MCF 10A (cell line): ENCODE measurements at regions of chr20 and their contacts with region 1.

Region 1: GRCh38 chr20:57351042-57351783 is at the start of gene RAE1:
- DNase-seq: peak; percentile 87
- H3K4me3 Mint-ChIP-seq: peak within 1 kb of the TSS; percentile 80
- H3K27ac Mint-ChIP-seq: peak within 1 kb of the TSS; percentile 81
- H3K4me1 Mint-ChIP-seq: peaks cover 15% of the 10 kb centered on the region
- H3K27me3 Mint-ChIP-seq: no peaks in the 10 kb centered on the region
- CTCF ChIP-seq: no peak
- total RNA-seq, gene RAE1: 46.7 and 60.3 TPM in 2 replicates

Region 2: GRCh38 chr20:57048027-57048869 is 303.0 kb before region 1 on chr20:
- CTCF ChIA-PET with region 1: interaction called, 11 read pairs
- POLR2A ChIA-PET with region 1: no interaction called
- intact Hi-C with region 1: no loop called
- DNase-seq: peak; percentile 85
- H3K4me3 Mint-ChIP-seq: no peak overlapping the region
- H3K27ac Mint-ChIP-seq: no peak overlapping the region
- H3K4me1 Mint-ChIP-seq: peaks cover 8% of the 10 kb centered on the region
- H3K27me3 Mint-ChIP-seq: no peaks in the 10 kb centered on the region
- CTCF ChIP-seq: peak; percentile 55

Region 3: DNA sequence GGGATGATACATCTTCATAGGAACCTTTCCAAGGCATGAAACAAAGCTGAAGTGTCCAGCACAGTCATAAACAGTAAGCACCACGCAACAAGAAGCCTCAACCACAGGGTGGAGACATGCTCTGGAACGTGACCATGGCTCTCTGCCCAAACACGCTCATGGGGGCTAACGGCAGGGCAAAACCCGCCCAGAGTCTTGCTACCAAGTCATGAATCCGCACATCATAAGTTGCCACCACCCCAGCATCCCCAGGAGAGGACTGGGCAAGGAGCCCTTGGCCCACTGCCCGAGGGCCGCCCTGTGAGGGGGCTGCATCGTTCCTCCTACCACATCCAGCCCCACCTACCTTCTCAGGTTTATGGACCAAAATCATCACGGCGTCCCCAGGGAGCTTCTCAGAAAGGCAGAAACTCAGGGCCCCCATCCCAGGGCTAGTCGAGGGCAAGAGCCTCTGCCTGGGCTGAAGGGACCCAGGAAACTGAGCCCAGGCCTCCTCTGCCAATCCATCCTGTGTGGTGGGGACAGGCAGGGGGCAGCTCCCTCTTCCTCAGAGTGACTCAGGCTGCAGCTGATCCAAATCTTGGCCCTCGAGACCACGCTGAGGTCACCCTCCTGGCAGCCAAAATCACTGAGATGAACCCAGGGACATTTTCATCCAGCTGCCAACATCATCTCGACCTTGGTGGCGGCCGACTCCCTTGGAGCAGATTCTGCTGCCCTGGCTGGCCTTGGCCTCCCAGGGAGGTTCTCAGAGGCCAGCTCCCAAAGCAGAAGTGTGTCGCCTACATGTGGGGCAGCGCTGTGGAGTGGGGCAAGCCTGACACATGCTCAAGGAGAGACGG is 127.3 kb before region 1 on chr20:
- CTCF ChIA-PET with region 1: interaction called, 12 read pairs
- POLR2A ChIA-PET with region 1: no interaction called
- intact Hi-C with region 1: no loop called
- DNase-seq: peak; percentile 11
- H3K4me3 Mint-ChIP-seq: no peak overlapping the region
- H3K27ac Mint-ChIP-seq: no peak overlapping the region
- H3K4me1 Mint-ChIP-seq: no peaks in the 10 kb centered on the region
- H3K27me3 Mint-ChIP-seq: peaks cover 12% of the 10 kb centered on the region
- CTCF ChIP-seq: no peak

Region 4: GRCh38 chr20:57323034-57323433 is 28.2 kb before region 1 on chr20:
- CTCF ChIA-PET with region 1: interaction called, 216 read pairs
- POLR2A ChIA-PET with region 1: interaction called, 4 read pairs
- intact Hi-C with region 1: no loop called
- DNase-seq: peak; percentile 89
- H3K4me3 Mint-ChIP-seq: no peak overlapping the region
- H3K27ac Mint-ChIP-seq: peak overlapping the region; percentile 26
- H3K4me1 Mint-ChIP-seq: peaks cover 20% of the 10 kb centered on the region
- H3K27me3 Mint-ChIP-seq: no peaks in the 10 kb centered on the region
- CTCF ChIP-seq: no peak

Region 5: GRCh38 chr20:57361212-57361915 is 10.2 kb after region 1 on chr20:
- CTCF ChIA-PET with region 1: interaction called, 30 read pairs
- POLR2A ChIA-PET with region 1: interaction called, 18 read pairs
- intact Hi-C with region 1: no loop called
- DNase-seq: peak; percentile 60
- H3K4me3 Mint-ChIP-seq: no peak overlapping the region
- H3K27ac Mint-ChIP-seq: no peak overlapping the region
- H3K4me1 Mint-ChIP-seq: no peaks in the 10 kb centered on the region
- H3K27me3 Mint-ChIP-seq: no peaks in the 10 kb centered on the region
- CTCF ChIP-seq: no peak